Activated CD4-positive, alpha-beta memory T cell treated with anti-CD3 and anti-CD28 coated beads for 36 hours (primary cell): ENCODE measurements at regions of chr4 and their contacts with region 1.

Region 1: DNA sequence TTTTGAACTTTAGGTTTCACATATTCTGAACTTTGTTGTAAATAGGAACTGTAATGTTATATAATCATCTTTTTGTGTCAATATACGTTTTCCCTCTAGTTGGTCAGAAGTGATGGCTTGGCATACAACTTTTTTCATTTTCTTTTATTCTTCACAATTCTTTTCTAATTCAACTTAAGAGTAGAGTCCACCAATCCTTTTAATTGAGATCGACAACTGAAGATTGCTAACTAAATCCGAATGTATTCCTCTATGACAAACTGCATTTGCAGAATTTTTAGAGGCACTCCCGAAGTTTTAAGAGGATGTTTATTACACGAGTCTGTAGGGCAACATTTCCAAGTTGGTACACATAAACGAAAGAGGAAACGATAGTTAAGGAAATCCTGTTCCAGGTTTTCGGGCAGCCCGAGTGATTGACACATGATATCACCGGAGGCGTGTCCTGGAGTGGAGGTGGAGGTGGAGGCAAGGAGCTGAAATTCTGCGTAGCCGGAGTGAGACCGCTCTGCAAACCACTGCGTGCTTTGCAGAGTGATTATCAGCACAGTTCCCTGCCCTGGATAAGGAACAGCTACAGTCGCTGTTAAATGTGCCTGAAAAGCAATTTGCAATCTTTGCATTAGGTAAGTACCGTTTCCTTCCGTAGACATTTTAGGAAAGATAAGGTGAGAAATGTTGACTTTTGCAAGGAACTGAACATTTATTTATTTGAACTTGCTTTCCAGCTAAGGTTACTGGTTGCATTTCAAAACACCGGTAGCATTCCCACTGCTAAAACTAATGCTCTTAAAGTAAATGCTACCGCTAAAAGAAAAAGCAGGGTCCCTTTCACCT is at the start of gene SPRY1:
- DNase-seq: peak; percentile 86
- H3K4me3 Mint-ChIP-seq: peak within 1 kb of the TSS; percentile 77
- H3K27ac Mint-ChIP-seq: peak within 1 kb of the TSS; percentile 42
- H3K4me1 Mint-ChIP-seq: peaks cover 26% of the 10 kb centered on the region
- H3K27me3 Mint-ChIP-seq: peaks cover 22% of the 10 kb centered on the region
- total RNA-seq, gene SPRY1: 11.1 to 14.0 TPM

Region 2: GRCh38 chr4:122625156-122625555 is 771.4 kb before region 1 on chr4:
- CTCF ChIA-PET with region 1: no interaction called
- POLR2A ChIA-PET with region 1: no interaction called
- intact Hi-C with region 1: loop called (anchors 10 kb)
- DNase-seq: no peak
- H3K4me3 Mint-ChIP-seq: no peak overlapping the region
- H3K27ac Mint-ChIP-seq: no peak overlapping the region
- H3K4me1 Mint-ChIP-seq: peaks cover 36% of the 10 kb centered on the region
- H3K27me3 Mint-ChIP-seq: no peaks in the 10 kb centered on the region

Region 3: DNA sequence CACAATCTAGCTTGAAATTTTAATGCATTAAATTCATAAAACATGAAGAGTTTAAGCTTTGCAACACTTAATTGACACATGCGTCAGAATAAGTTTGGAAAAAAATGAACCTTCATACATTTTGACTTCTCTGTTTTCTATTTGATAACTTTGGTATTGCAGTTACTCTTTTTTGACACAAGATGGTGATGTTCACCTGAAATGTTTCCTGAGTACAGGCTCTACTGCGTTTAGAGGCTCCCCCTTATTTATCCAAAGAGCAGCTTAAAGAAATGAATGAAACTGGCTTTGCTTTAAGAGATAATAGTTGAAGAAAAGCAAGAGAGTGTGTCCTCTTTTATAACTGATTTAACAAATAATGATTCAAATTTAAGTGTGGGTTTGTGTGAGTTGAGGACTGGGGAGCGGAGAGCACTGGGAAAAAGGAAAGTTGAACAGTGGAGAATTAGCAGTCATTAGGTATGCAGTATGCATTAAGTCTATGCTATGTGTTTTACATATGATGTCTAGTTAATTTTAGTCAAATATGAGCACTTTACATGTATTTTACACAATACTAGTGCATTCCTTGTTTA is 293.5 kb before region 1 on chr4:
- CTCF ChIA-PET with region 1: no interaction called
- POLR2A ChIA-PET with region 1: no interaction called
- intact Hi-C with region 1: loop called (anchors 5 kb)
- DNase-seq: no peak
- H3K4me3 Mint-ChIP-seq: no peak overlapping the region
- H3K27ac Mint-ChIP-seq: no peak overlapping the region
- H3K4me1 Mint-ChIP-seq: no peaks in the 10 kb centered on the region
- H3K27me3 Mint-ChIP-seq: no peaks in the 10 kb centered on the region

Region 4: DNA sequence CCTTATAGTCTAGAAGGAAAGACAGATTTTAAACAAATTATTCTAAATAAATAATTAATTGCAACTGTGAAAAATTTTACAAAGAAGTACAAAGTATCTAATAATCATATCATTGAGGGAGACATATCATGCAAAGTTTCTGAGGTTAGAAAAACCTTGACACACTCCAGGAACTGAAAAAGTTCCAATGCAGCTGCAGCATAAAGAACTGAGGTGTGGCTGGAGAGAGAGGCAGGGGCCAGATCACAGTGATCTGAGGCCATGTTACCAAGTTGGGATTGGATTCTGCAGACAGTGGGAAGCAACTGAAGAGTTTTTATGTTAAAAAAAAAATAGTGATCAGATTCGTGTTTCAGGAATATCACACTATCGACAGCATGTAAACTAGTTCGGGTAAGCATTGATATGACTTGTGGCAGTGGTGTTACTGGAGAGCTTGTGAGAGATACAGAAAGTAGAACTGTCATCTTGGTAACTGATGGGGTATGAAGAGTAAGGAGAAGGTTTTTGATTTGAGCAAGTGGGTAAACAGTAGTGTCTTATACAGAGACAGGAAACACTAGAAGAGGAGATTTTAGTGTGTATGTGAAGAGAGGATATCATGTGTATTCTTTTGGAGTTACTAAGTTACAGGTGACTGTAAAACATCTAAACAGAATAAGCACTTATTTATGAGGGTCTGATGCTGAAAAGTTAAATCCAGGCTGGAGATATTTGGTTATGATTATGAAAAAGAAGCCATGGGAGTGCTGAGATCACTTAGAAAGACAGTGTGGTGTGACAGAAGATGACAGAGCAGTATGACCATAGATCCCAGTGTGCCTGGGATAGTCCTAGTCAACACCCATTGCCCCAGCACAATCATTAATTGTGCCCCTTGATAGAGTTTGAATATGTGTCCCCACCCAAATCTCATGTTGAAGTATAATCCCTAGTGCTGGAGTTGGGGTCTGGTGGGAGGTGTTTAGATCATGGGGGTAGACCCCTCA is 15.5 kb before region 1 on chr4:
- CTCF ChIA-PET with region 1: no interaction called
- POLR2A ChIA-PET with region 1: no interaction called
- intact Hi-C with region 1: no loop called
- DNase-seq: no peak
- H3K4me3 Mint-ChIP-seq: no peak overlapping the region
- H3K27ac Mint-ChIP-seq: no peak overlapping the region
- H3K4me1 Mint-ChIP-seq: no peaks in the 10 kb centered on the region
- H3K27me3 Mint-ChIP-seq: peaks cover 5% of the 10 kb centered on the region

Region 5: DNA sequence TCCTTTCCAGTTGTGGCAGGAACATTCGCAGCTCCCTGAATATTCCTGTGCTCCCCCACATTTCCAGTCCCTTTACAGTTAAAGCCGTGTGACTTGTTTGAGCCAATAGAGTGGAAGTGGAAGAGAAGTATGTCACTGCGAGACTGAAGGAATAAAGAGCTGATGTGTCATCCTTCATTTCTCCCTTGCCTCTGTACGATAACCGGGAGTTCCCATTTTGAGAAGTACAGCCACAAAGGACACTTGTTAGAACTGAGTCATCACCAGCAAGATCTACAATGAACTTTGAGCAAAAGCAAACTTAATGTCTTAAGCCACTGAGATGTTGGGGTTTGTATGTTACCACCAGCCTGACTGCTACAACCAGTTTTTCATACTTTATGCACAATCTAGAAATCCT is 92.4 kb after region 1 on chr4:
- CTCF ChIA-PET with region 1: no interaction called
- POLR2A ChIA-PET with region 1: no interaction called
- intact Hi-C with region 1: loop called (anchors 2 kb)
- DNase-seq: no peak
- H3K4me3 Mint-ChIP-seq: no peak overlapping the region
- H3K27ac Mint-ChIP-seq: no peak overlapping the region
- H3K4me1 Mint-ChIP-seq: peaks cover 5% of the 10 kb centered on the region
- H3K27me3 Mint-ChIP-seq: peaks cover 4% of the 10 kb centered on the region

Region 6: GRCh38 chr4:123536225-123536624 is 139.7 kb after region 1 on chr4:
- CTCF ChIA-PET with region 1: no interaction called
- POLR2A ChIA-PET with region 1: no interaction called
- intact Hi-C with region 1: no loop called
- DNase-seq: no peak
- H3K4me3 Mint-ChIP-seq: no peak overlapping the region
- H3K27ac Mint-ChIP-seq: no peak overlapping the region
- H3K4me1 Mint-ChIP-seq: no peaks in the 10 kb centered on the region
- H3K27me3 Mint-ChIP-seq: no peaks in the 10 kb centered on the region

Region 7: GRCh38 chr4:123616951-123617461 is 220.5 kb after region 1 on chr4:
- CTCF ChIA-PET with region 1: no interaction called
- POLR2A ChIA-PET with region 1: no interaction called
- intact Hi-C with region 1: loop called (anchors 5 kb)
- DNase-seq: peak; percentile 27
- H3K4me3 Mint-ChIP-seq: no peak overlapping the region
- H3K27ac Mint-ChIP-seq: no peak overlapping the region
- H3K4me1 Mint-ChIP-seq: peaks cover 12% of the 10 kb centered on the region
- H3K27me3 Mint-ChIP-seq: no peaks in the 10 kb centered on the region